Common myeloid progenitor, CD34-positive (primary cell): ENCODE measurements at regions of chr3 and their contacts with region 1.

Region 1: GRCh38 chr3:124761250-124761796 is 31.1 kb downstream of the UMPS start:
- DNase-seq: peak; percentile 77 to 89 (median 82)
- H3K4me3 ChIP-seq: no peak overlapping the region
- H3K27ac ChIP-seq: no peak overlapping the region
- H3K4me1 ChIP-seq: peaks cover 0 to 11% (median 7%) of the 10 kb centered on the region in 4 experiments
- H3K27me3 ChIP-seq: no peaks in the 10 kb centered on the region

Region 2: GRCh38 chr3:124698030-124698770 is 63.1 kb before region 1 on chr3:
- CTCF ChIA-PET with region 1: no interaction called
- POLR2A ChIA-PET with region 1: no interaction called
- DNase-seq: no peak
- H3K4me3 ChIP-seq: no peak overlapping the region
- H3K27ac ChIP-seq: no peak overlapping the region
- H3K4me1 ChIP-seq: no peaks in the 10 kb centered on the region
- H3K27me3 ChIP-seq: peaks cover 0 to 20% (median 4%) of the 10 kb centered on the region in 5 experiments

Region 3: GRCh38 chr3:124780761-124781475 is 19.6 kb after region 1 on chr3:
- CTCF ChIA-PET with region 1: interaction called, 10 read pairs
- POLR2A ChIA-PET with region 1: no interaction called
- DNase-seq: peak in 2 of 3 donors; percentile 57 to 67
- H3K4me3 ChIP-seq: peak overlapping the region in 1 of 7 experiments; percentile 6
- H3K27ac ChIP-seq: no peak overlapping the region
- H3K4me1 ChIP-seq: peaks cover 0 to 40% (median 28%) of the 10 kb centered on the region in 4 experiments
- H3K27me3 ChIP-seq: peaks cover 0 to 2% (median 0%) of the 10 kb centered on the region in 5 experiments

Region 4: DNA sequence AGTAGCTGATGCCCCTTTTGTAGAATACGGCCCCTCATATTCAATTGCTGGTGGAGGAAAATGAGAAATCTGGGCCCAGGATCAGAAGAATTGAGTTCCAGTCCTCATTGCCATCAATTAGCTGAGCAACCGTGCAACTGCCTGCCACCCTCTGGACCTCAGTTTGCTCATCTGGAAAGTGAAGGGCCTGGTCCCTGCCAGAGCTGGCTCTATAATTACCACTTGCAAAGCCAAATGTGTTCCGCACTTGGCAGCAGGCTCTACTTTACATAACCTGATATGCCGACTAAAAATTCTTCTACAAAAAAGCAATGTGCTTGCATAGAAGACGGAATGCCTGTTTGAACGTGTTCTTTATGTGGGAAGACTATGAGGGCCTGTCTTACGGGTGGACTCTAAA is 134.4 kb after region 1 on chr3:
- CTCF ChIA-PET with region 1: interaction called, 148 read pairs
- POLR2A ChIA-PET with region 1: interaction called, 7 read pairs
- DNase-seq: no peak
- H3K4me3 ChIP-seq: no peak overlapping the region
- H3K27ac ChIP-seq: no peak overlapping the region
- H3K4me1 ChIP-seq: no peaks in the 10 kb centered on the region
- H3K27me3 ChIP-seq: no peaks in the 10 kb centered on the region

Region 5: DNA sequence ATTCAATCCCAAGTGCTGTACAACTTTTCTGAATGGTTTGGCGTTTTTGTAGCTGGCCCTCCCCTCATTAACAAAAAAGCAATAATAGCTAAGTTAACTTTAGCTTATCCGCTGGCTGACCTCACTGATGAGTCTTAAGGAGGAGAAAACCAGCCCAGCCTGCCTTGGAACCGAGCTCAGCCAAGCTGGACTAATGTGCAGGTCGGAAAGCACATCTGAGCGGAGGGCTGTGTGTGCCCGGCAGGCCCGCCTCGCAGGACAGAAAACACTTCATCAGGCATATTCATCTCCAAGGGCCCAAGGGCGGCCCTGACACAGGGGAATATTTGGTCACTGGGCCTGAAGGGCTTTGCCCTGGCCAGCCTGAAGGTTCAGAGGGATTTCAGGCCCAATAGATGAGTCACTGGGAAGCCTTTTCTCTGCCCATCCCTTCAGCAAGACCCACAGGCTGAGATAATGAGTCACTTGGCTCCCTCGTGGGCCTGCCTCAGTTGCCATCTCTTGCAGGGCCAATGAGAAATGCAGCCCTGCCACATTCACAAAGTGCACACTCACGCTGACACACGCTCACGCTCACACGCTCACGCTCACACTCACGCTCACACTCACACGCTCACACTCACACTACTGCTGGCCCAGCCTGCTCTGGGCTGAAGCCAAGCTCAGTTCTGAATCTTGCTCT is 376.2 kb after region 1 on chr3:
- CTCF ChIA-PET with region 1: no interaction called
- POLR2A ChIA-PET with region 1: no interaction called
- DNase-seq: no peak
- H3K4me3 ChIP-seq: no peak overlapping the region
- H3K27ac ChIP-seq: no peak overlapping the region
- H3K4me1 ChIP-seq: peaks cover 0 to 28% (median 19%) of the 10 kb centered on the region in 4 experiments
- H3K27me3 ChIP-seq: no peaks in the 10 kb centered on the region